BJ (cell line): ENCODE measurements at regions of chr20 and their contacts with region 1.

Region 1: DNA sequence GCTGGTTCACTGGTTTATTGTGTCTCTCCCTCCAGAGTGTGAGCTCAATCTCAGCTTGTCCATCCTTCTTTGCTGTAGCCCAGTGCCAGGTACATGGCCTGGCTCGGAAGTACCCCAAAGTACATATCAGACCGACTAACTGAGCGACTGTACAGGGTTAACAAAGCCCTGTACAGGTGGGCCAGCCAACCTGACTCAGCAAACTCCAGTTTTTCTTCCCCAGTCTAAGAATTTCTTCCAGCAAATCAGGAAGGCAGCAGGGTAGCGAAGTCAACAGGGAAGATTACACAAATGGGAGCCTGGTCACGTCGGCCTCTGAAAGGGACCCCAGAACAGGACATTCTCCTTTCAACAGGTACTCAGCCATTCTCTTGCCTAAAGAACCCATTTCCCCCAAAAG is 31.3 kb downstream of the ZMYND8 start:
- DNase-seq: no peak
- H3K4me3 ChIP-seq: no peak overlapping the region
- H3K27me3 ChIP-seq: no peaks in the 10 kb centered on the region
- CTCF ChIP-seq: no peak

Region 2: DNA sequence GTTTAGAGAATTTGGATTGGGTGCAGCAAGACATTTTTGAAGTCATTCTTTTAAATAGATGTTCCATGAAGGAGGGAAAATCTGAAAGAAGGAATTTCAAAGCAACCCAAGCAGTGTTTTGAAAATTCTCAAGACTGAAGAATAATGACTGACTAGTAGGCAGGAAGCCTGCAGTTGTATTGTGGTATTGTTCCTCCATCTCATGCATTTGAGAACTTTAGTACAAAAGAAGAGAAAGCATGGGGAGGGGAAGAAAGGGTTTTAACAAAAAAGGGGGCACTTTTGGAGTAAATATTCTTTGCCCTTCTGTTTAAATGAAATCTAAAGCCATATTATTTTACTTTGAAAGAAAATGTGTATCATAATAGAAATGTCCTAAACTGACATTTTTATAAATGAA is 183.0 kb after region 1 on chr20:
- CTCF ChIA-PET with region 1: interaction called, 10 read pairs
- POLR2A ChIA-PET with region 1: no interaction called
- DNase-seq: no peak
- H3K4me3 ChIP-seq: no peak overlapping the region
- H3K27me3 ChIP-seq: no peaks in the 10 kb centered on the region
- CTCF ChIP-seq: no peak